ENCODE measurements at regions of chr16 and their contacts with region 1.

Region 1: DNA sequence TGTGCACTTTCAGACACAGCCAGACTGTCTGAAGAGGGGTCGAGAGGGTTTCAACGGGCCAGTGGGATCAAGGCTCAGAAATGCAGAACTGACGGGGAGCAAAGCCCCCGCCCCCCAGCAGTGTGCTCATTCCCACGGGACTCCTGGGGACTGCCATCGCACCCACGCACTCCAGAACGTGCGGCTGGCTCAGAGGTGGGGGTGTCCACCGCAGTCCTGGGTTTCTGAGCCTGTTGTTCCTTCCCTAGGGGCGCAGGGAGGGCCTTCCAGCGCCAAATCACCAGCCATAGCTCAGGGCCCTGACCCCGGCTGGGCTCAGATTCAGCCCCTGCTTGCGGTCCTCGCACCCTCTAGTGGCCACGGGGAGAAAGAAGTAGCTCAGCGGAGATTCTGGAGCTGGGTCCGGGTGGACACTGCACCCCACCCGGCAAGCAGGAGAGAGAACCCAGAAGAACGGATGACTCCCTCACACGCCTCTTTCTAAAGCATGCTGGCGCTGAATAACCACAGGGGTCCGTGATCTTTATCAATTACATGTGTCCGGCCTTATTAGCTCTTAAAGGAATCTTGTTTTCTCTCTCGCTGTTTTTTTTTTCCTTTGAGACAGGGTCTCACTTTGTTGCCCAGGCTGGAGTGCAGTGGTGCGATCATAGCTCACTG is 45.0 kb upstream of the USP7 start:
- DNase-seq: no peak
- H3K4me3 ChIP-seq: 0 out of 2 replicates have a peak overlapping the region, but pooled peaks have one; percentile 1
- H3K27ac ChIP-seq: no peak overlapping the region
- H3K27me3 ChIP-seq: no peaks in the 10 kb centered on the region
- CTCF ChIP-seq: peak; percentile 89

Region 2: DNA sequence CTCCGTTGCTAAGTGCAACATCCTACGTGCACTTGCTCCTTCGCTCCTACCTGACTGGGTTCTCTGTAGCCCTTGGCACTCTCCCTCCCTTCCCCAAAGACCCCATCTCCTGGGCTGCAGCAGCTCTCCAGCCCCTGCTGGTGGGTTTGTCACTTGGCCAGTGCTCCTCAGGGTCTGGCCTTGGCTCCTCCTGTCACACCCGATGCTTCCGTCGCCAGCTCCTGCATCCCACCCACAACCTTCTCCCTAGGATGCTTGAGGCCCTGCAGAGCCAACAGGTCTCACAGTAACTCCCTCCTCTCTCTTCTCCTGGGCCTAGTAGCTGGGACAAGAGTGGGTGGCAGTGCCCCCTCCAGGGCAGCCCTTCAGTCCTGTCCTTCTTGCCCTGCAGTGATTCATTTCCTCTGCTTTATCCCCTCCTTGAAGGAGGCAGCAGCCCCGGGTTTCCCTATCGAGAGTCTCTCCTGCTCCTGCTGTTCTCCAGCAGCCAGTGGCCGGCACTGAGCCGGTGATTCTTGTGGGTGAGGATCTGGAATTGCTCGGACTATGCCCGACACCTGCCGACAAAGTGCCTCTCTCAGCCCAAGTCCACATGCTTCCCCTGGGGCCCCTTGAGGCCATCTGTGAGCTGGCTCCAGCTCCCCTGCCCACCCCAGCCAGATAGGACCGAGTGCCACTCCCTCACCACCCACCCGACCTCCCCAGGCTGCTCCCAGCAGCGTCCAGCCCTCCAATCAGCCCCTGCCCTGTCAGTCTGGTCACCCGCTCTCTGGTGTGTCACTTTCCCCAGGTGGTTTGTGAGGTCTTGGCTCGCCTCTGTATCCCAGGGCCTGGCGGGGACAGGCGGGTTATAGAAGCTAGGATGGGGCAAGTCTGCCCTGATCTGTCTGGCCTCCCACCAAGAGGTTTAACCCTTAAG is 122.8 kb before region 1 on chr16:
- CTCF ChIA-PET with region 1: interaction called, 26 read pairs
- POLR2A ChIA-PET with region 1: no interaction called
- DNase-seq: no peak
- H3K4me3 ChIP-seq: no peak overlapping the region
- H3K27ac ChIP-seq: peak overlapping the region; percentile 91
- H3K27me3 ChIP-seq: no peaks in the 10 kb centered on the region
- CTCF ChIP-seq: peak; percentile 25; the same call in 1 of the 2 replicates

Region 3: DNA sequence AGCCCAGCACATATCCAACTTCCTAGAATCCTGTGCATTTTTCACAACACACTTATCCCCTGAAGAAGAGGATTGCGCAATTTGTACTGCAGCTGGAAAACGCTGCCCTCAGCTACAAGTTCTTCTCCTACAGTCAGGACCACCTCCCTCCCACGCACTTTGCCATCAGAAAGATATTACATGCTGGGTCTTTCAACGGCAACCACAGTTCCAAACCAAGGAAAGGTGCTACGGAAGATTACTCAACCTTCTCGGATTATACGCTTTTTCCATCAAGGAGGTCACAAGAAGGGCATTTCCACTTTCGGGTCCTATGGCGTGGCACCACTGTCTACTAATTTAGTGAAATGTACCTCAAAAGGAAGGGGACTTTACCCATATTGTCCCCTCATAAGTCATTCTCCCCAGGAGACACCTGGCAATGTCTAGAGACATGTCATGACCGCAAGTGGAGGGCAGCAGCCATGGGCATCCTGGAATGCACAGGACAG is 80.2 kb before region 1 on chr16:
- CTCF ChIA-PET with region 1: interaction called, 13 read pairs
- POLR2A ChIA-PET with region 1: no interaction called
- DNase-seq: peak; percentile 21
- H3K4me3 ChIP-seq: no peak overlapping the region
- H3K27ac ChIP-seq: no peak overlapping the region
- H3K27me3 ChIP-seq: no peaks in the 10 kb centered on the region
- CTCF ChIP-seq: no peak

Region 4: DNA sequence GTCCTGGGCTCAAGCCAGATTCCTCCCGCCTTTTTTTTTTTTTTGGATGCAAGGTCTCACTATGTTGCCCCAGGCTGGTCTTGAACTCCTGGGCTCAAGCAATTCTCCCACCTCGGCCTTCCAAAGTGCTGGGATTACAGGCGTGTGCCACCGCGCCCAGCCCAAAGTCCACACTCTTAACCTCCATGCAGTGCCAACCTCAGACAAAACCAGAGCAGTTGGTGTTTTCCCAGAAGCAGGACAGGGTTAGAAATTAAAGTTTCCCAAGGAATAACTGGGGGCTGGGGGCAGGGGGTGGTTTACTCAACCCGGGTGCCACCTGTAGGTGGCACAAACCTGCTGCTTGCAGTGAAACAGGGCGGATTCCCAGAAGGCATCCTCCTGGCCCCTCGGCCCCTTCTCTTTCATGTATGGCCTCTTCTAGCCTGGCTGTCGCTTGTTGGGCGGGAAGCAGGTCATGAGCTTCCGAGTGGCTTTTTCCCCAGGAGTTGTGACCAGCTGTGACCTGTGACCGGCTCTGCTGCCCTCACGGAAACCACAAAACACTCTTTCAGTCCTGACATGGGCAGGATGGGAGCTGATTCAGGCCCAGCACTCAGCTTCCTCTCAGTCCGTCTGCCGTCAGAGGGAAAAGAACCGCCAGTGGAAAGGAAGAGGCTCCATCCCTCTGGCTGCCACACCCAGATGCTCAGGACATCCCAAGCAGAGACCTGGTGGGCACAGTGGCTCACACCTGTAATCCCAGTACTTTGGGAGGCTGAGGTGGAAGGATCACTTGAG is 19.4 kb before region 1 on chr16:
- CTCF ChIA-PET with region 1: interaction called, 17 read pairs
- POLR2A ChIA-PET with region 1: no interaction called
- DNase-seq: no peak
- H3K4me3 ChIP-seq: no peak overlapping the region
- H3K27ac ChIP-seq: no peak overlapping the region
- H3K27me3 ChIP-seq: no peaks in the 10 kb centered on the region
- CTCF ChIP-seq: no peak

Region 5: GRCh38 chr16:9033125-9033830 is 24.5 kb after region 1 on chr16:
- CTCF ChIA-PET with region 1: interaction called, 26 read pairs
- POLR2A ChIA-PET with region 1: no interaction called
- DNase-seq: no peak
- H3K4me3 ChIP-seq: no peak overlapping the region
- H3K27ac ChIP-seq: no peak overlapping the region
- H3K27me3 ChIP-seq: no peaks in the 10 kb centered on the region
- CTCF ChIP-seq: peak; percentile 68

Region 6: GRCh38 chr16:9134739-9135138 is 126.0 kb after region 1 on chr16:
- CTCF ChIA-PET with region 1: interaction called, 18 read pairs
- POLR2A ChIA-PET with region 1: no interaction called
- DNase-seq: no peak
- H3K4me3 ChIP-seq: no peak overlapping the region
- H3K27ac ChIP-seq: no peak overlapping the region
- H3K27me3 ChIP-seq: no peaks in the 10 kb centered on the region
- CTCF ChIP-seq: peak; percentile 63

Measured in AG04450 (cell line).